Aorta (tissue), 5 donors: ENCODE measurements at regions of chr11 and their contacts with region 1.

Region 1: GRCh38 chr11:14583252-14584034 is 60.2 kb upstream of the PDE3B start:
- DNase-seq: no peak
- ATAC-seq: peak; percentile 35
- H3K4me3 ChIP-seq: no peak overlapping the region
- H3K27ac ChIP-seq: no peak overlapping the region
- H3K4me1 ChIP-seq: no peaks in the 10 kb centered on the region
- H3K27me3 ChIP-seq: no peaks in the 10 kb centered on the region

Region 2: DNA sequence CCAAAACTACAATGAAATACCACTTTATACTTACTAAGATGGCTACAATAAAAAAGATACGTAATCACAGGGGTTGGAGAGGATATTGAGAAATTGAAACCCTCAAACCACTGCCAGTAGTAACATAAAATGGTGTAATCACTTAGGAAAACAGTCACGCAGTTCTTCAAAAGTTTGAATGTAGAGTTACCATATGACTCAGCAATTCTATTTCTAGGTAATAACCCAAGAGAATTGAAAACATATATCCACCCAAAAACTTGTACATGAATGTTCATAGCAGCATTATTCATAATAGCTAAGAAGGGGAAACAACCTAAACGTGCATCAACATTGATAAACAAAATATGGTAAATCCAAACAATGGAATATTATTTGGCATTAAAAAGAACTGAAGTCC is 38.8 kb before region 1 on chr11:
- intact Hi-C with region 1: loop called in 1 of 2 experiments (anchors 5 kb)
- DNase-seq: no peak
- ATAC-seq: no peak
- H3K4me3 ChIP-seq: no peak overlapping the region
- H3K27ac ChIP-seq: no peak overlapping the region
- H3K4me1 ChIP-seq: peaks cover 0 to 3% of the 10 kb centered on the region in 2 donors
- H3K27me3 ChIP-seq: no peaks in the 10 kb centered on the region